ENCODE measurements at regions of chr5 and their contacts with region 1.

Region 1: GRCh38 chr5:68287976-68288706 is 72.6 kb downstream of the PIK3R1 start:
- DNase-seq: peak; percentile 65 to 96 (median 79)

Region 2: GRCh38 chr5:68086857-68087256 is 201.3 kb before region 1 on chr5:
- intact Hi-C with region 1: no loop called
- DNase-seq: peak in 5 of 10 donors; percentile 13 to 86 (median 41)

Region 3: GRCh38 chr5:68251386-68251785 is 36.8 kb before region 1 on chr5:
- intact Hi-C with region 1: no loop called
- DNase-seq: no peak

Region 4: GRCh38 chr5:68460147-68460798 is 172.1 kb after region 1 on chr5:
- intact Hi-C with region 1: loop called (anchors 1 kb)
- DNase-seq: no peak

Region 5: GRCh38 chr5:68745448-68745847 is 457.3 kb after region 1 on chr5:
- intact Hi-C with region 1: loop called (anchors 5 kb)
- DNase-seq: peak in 6 of 10 donors; percentile 20 to 88 (median 32)

Region 6: DNA sequence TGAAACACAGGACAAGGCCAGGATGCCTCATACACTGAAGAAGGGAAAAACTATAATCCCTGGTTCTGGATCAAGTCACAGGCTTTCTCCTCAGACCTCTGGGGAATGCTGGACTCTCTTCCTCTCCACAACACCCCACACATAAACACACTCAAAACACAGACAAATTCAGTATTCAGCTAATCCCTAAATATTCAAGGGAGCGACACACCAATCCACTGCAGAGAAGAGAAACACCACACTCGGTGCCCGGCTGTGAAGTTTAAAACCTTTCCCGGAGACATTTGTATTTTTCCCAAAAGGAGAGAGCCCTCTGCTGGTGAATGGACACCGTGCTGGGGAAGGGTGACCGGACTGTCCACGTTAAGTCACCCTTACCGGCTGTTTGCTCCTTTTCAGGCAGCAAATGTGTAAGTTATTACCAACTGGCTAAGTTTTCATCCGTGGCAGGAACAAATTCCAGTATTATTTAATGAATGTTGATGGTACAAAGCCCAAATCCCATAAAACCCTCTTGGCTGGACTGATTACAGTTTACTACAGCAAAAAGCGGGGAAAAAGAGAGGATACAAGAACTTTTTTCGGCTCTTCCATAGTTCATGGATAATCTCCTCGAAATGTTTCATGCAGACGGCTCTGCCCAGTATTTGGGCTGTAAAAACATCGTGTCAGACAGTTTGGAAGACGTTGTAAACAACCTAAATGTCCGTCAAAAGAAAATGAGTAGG is 674.8 kb after region 1 on chr5:
- intact Hi-C with region 1: loop called (anchors 1 kb)
- DNase-seq: peak; percentile 43 to 91 (median 68)

Region 7: DNA sequence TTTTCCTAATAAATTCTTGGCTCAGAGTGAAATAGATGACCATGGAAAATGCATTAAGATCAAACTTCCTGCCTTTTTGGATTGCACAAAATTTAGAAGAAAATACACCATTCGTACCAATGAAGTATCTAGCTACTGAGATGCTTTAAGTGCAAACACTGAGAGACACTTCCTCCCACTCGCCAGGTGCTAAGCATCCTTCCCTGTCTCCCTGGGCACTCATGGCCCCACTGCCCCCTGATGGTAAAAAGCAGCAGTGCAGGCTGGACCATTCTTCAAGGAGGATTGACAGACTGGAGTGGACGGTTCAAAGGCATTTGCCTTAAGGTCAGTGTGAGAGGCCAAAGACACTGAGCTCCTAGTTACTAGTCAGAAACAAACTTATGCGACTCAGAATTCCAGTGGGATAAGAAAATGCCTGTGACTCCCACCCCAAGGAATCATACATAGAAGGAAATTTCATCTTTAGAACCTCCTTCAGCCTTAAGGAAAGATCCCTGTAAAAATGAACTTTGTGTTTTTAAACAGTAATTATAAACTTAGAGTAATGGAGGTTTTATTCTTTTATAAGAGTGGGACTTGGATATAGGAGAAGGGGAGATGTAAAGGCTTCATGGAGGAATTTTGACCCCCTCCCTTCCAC is 719.7 kb after region 1 on chr5:
- intact Hi-C with region 1: loop called (anchors 5 kb)
- DNase-seq: peak; percentile 64 to 95 (median 80)

Region 8: DNA sequence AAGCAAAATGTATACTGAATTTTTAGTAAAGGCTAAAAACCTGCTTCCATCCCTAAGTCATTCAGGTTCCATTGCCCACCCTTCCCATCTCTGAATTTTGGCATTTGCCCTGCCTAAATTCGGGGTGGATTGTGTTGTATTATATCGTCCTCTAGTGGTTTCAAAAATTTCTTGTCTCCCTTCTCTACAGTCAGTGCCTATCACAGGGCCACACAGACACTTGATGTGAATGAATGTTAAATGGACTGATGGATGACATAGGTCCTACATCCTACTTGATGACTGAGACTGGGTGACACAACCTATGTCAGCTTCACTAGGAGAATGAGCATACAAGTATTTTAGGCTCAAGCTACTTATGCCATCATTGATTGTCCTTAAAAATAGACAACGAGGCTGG is 760.1 kb after region 1 on chr5:
- intact Hi-C with region 1: loop called (anchors 5 kb)
- DNase-seq: no peak